Endothelial cell of umbilical vein (primary cell): ENCODE measurements at regions of chr2 and their contacts with region 1.

Region 1: DNA sequence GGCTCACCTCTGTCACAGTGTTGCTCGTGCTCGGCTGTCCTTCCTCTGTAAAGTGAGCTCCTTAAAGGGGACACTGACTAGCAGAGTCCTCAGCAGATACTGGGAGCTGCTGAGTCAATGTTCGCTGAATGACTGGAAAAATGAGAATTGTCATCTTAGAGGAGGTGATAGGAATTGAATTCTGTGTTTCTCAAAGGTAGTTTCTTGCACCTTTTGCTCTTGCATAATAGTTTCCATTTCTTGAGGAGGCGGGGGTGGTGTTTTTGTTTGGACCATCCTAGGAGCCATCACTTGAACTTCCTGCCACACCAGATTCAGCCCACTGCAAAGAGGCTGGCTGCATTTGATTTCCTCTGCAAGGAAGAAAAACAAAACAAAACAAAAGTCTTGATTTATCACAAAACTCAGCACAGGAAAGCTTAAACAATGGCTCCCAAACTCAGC is 11.4 kb upstream of the RFX8 start:
- DNase-seq: peak; percentile 85
- H3K4me3 ChIP-seq: peak overlapping the region in 1 of 3 experiments; percentile 2
- H3K27ac ChIP-seq: peak overlapping the region; percentile 26
- H3K4me1 ChIP-seq: peaks cover 17% of the 10 kb centered on the region
- H3K27me3 ChIP-seq: no peaks in the 10 kb centered on the region
- CTCF ChIP-seq: no peak
- POLR2A ChIP-seq: no peak

Region 2: GRCh38 chr2:101387151-101387807 is 99.0 kb before region 1 on chr2 and contains the start of gene CREG2:
- CTCF ChIA-PET with region 1: no interaction called
- POLR2A ChIA-PET with region 1: no interaction called
- dilution Hi-C with region 1: no loop called
- intact Hi-C with region 1: no loop called
- DNase-seq: peak; percentile 74
- H3K4me3 ChIP-seq: peak within 1 kb of the TSS; percentile 32 to 54 (median 43)
- H3K27ac ChIP-seq: no peak within 1 kb of the TSS
- H3K4me1 ChIP-seq: peaks cover 19% of the 10 kb centered on the region
- H3K27me3 ChIP-seq: peaks cover 36 to 46% of the 10 kb centered on the region in 2 experiments
- CTCF ChIP-seq: peak; percentile 53 to 61
- POLR2A ChIP-seq: no peak
- total RNA-seq, gene CREG2: 0.88 and 2.0 TPM in 2 replicates

Region 3: DNA sequence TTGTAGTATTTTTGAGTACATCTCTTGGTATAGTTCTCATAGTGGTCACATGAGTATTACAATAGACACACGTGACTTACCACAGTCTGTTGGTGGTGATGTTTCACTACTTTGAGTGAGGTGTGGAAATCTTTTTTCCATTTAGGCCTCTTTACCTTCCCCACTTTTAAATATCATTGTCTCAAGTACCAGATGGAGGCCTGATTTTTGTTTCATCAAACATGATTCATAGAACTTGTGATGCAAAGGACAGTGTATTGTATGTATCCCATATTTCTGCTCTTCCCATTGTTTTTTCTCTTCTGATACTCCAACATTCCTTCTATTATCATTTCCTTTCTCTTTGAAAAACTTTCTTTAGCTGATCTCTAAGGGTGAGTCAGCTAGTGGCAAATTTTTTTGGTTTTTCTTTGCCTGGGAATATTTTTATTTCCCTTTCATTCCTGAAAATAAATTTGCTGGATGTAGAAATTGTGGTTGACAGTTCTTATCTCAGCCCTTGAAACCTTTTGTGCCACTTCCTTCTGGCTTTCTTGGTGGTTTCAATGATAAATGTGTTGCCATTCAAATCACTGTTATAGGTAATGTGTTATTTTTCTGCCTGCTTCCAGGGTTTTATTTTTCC is 44.1 kb before region 1 on chr2:
- CTCF ChIA-PET with region 1: interaction called, 3 read pairs
- POLR2A ChIA-PET with region 1: no interaction called
- dilution Hi-C with region 1: no loop called
- intact Hi-C with region 1: loop called (anchors 1 kb)
- DNase-seq: peak; percentile 63
- H3K4me3 ChIP-seq: no peak overlapping the region
- H3K27ac ChIP-seq: peak overlapping the region; percentile 42
- H3K4me1 ChIP-seq: peaks cover 13% of the 10 kb centered on the region
- H3K27me3 ChIP-seq: no peaks in the 10 kb centered on the region
- CTCF ChIP-seq: no peak
- POLR2A ChIP-seq: no peak

Region 4: GRCh38 chr2:101619191-101619591 is 132.9 kb after region 1 on chr2:
- CTCF ChIA-PET with region 1: no interaction called
- POLR2A ChIA-PET with region 1: no interaction called
- dilution Hi-C with region 1: no loop called
- intact Hi-C with region 1: no loop called
- DNase-seq: peak; percentile 94
- H3K4me3 ChIP-seq: peak overlapping the region in 1 of 3 experiments; percentile 13
- H3K27ac ChIP-seq: no peak overlapping the region
- H3K4me1 ChIP-seq: peaks cover 7% of the 10 kb centered on the region
- H3K27me3 ChIP-seq: no peaks in the 10 kb centered on the region
- CTCF ChIP-seq: no peak
- POLR2A ChIP-seq: no peak

Region 5: GRCh38 chr2:102301867-102302362 is 815.6 kb after region 1 on chr2:
- CTCF ChIA-PET with region 1: no interaction called
- POLR2A ChIA-PET with region 1: no interaction called
- dilution Hi-C with region 1: no loop called
- intact Hi-C with region 1: no loop called
- DNase-seq: peak; percentile 51
- H3K4me3 ChIP-seq: no peak overlapping the region
- H3K27ac ChIP-seq: peak overlapping the region; percentile 2
- H3K4me1 ChIP-seq: peaks cover 38% of the 10 kb centered on the region
- H3K27me3 ChIP-seq: no peaks in the 10 kb centered on the region
- CTCF ChIP-seq: peak; percentile 40 to 41
- POLR2A ChIP-seq: no peak